A549 (cell line): ENCODE measurements at regions of chr3 and their contacts with region 1.

Region 1: GRCh38 chr3:12663936-12664908 is at the start of gene RAF1:
- DNase-seq: peak; percentile 92 to 98
- ATAC-seq: peak; percentile 90 to 96
- H3K4me3 ChIP-seq: peak within 1 kb of the TSS; percentile 85
- H3K27ac ChIP-seq: peak within 1 kb of the TSS; percentile 97 to 98
- H3K4me1 ChIP-seq: peaks cover 22% of the 10 kb centered on the region; the same call in 2 of the 3 replicates
- CTCF ChIP-seq: no peak
- EP300 ChIP-seq: no peak
- POLR2A ChIP-seq: peak; percentile 78
- RAD21 ChIP-seq: peak in 1 of 2 experiments; percentile 25; a peak in 1 of 5 replicates
- polyA plus RNA-seq, gene RAF1: 94.6 and 109 TPM in 2 replicates

Region 2: GRCh38 chr3:12484198-12484974 is 179.8 kb before region 1 on chr3 and contains the start of gene TSEN2:
- CTCF ChIA-PET with region 1: no interaction called
- POLR2A ChIA-PET with region 1: no interaction called
- DNase-seq: peak; percentile 92 to 95
- ATAC-seq: peak; percentile 87 to 96
- H3K4me3 ChIP-seq: peak within 1 kb of the TSS; percentile 81
- H3K27ac ChIP-seq: peak within 1 kb of the TSS; percentile 88 to 93
- H3K4me1 ChIP-seq: peaks cover 25% of the 10 kb centered on the region
- CTCF ChIP-seq: no peak
- EP300 ChIP-seq: no peak
- POLR2A ChIP-seq: peak; percentile 95
- RAD21 ChIP-seq: peak in 1 of 2 experiments; percentile 22; a peak in 1 of 5 replicates
- polyA plus RNA-seq, gene TSEN2: 29.8 and 33.1 TPM in 2 replicates

Region 3: GRCh38 chr3:12679468-12679867 is 15.2 kb after region 1 on chr3:
- CTCF ChIA-PET with region 1: interaction called, 3 read pairs
- POLR2A ChIA-PET with region 1: interaction called, 13 read pairs
- DNase-seq: peak; percentile 73 to 89
- ATAC-seq: peak; percentile 96 to 97
- H3K4me3 ChIP-seq: no peak overlapping the region
- H3K27ac ChIP-seq: peak overlapping the region; percentile 24 to 63; a peak in 4 of 6 replicates
- H3K4me1 ChIP-seq: peaks cover 26% of the 10 kb centered on the region; the same call in 2 of the 3 replicates
- CTCF ChIP-seq: no peak
- EP300 ChIP-seq: no peak
- POLR2A ChIP-seq: no peak
- RAD21 ChIP-seq: peak in 1 of 2 experiments; percentile 8; a peak in 1 of 5 replicates

Region 4: GRCh38 chr3:12714278-12714677 is 50.1 kb after region 1 on chr3:
- CTCF ChIA-PET with region 1: no interaction called
- POLR2A ChIA-PET with region 1: no interaction called
- DNase-seq: no peak
- ATAC-seq: no peak
- H3K4me3 ChIP-seq: no peak overlapping the region
- H3K27ac ChIP-seq: no peak overlapping the region
- H3K4me1 ChIP-seq: no peaks in the 10 kb centered on the region
- CTCF ChIP-seq: no peak
- EP300 ChIP-seq: no peak
- POLR2A ChIP-seq: no peak
- RAD21 ChIP-seq: no peak